A549 (cell line): ENCODE measurements at regions of chr2 and their contacts with region 1.

Region 1: DNA sequence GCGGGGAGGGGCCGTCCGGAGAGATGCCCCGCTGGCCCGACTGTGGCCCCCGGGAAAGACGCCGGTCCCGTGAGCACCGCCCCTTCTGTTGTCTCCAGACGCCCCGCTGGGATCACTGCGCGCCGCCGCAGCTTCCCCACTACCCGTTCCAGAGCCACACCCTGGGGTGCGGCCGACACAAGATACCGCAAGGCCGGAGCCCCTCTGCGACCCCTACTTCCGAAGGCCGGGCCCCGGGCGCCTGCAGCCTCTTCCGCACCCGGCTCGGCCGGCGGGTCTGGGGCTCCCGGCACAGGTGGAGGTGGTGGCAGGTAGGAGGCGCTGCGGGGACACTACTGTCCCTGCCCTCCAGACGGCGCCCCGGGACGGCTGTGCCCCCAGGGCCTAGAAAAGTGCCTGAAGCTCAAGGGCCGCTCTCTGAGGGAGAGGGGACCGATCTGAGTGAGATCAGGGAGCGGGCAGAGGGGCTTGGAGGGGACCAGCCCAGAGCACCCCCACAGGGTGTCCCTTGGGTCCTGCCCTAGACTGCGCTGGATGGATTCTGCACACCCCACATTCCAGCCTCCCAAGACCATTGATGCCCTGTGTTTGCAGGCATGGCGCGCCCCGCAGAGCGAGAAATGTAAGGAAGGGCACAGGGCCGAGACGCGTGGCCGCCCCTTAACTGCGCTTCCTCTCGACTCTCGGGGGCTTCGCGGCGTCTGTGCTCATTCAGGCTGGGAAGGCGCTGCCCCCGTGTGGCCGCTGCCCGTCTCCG is 80.0 kb downstream of the GFPT1 start:
- DNase-seq: peak; percentile 88 to 90
- ATAC-seq: peak; percentile 81 to 92
- H3K4me3 ChIP-seq: peak overlapping the region; percentile 86
- H3K27ac ChIP-seq: peak overlapping the region; percentile 94 to 99
- H3K4me1 ChIP-seq: peaks cover 37% of the 10 kb centered on the region
- CTCF ChIP-seq: peak; percentile 92
- EP300 ChIP-seq: no peak
- POLR2A ChIP-seq: peak; percentile 19; the same call in 1 of the 2 replicates
- RAD21 ChIP-seq: peak; percentile 97 to 99

Region 2: GRCh38 chr2:69020496-69021426 is 286.2 kb before region 1 on chr2:
- CTCF ChIA-PET with region 1: interaction called, 38 read pairs
- POLR2A ChIA-PET with region 1: interaction called, 12 read pairs
- DNase-seq: no peak
- ATAC-seq: no peak
- H3K4me3 ChIP-seq: no peak overlapping the region
- H3K27ac ChIP-seq: peak overlapping the region in 1 of 2 experiments; percentile 30; a peak in 3 of 6 replicates
- H3K4me1 ChIP-seq: peaks cover 85% of the 10 kb centered on the region
- CTCF ChIP-seq: no peak
- EP300 ChIP-seq: no peak
- POLR2A ChIP-seq: no peak
- RAD21 ChIP-seq: no peak

Region 3: GRCh38 chr2:69163109-69163508 is 143.9 kb before region 1 on chr2:
- CTCF ChIA-PET with region 1: interaction called, 17 read pairs
- POLR2A ChIA-PET with region 1: interaction called, 6 read pairs
- DNase-seq: peak; percentile 67 to 90
- ATAC-seq: peak; percentile 83 to 86
- H3K4me3 ChIP-seq: no peak overlapping the region
- H3K27ac ChIP-seq: peak overlapping the region; percentile 74 to 84
- H3K4me1 ChIP-seq: peaks cover 49% of the 10 kb centered on the region
- CTCF ChIP-seq: no peak
- EP300 ChIP-seq: peak; percentile 71 to 75; a peak in 2 of 5 replicates
- POLR2A ChIP-seq: no peak
- RAD21 ChIP-seq: peak in 1 of 2 experiments; percentile 32; a peak in 1 of 5 replicates

Region 4: DNA sequence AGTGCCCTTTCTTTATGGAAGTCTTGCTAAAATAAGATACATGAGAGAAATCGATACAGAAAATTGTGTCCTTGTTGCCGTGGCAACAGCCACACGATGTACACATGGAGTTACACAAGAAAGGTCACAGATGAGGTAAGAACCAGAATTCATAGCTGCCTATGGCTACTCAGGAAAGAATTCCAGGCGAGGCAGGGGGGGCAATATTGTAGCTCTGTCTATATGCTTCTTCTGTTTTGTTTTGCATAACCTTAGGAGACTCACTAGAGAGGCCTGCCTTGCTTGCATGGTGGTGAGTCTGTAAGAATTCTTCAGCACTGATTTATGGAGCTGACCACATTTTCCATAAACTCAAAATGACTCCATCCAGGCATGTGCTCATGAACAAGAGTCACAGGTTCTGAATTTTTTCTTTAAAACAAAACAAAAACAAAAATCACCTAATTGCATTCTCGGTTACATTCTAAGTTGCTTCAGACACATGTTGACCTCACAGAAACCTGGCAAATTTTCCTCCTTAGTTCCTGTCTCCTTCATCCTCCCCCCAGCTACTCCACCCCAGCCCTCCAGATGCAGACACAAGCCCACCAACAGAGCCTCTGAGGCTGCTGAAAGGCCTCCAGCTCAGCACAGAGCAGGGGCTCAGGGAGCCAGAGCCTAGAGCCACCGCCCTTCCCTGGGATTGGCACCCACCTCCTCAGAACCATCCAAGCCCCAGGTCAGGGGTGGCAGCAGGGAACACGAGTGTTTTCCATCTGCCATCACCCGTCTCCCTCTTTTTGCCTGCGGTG is 110.5 kb before region 1 on chr2:
- CTCF ChIA-PET with region 1: interaction called, 15 read pairs
- POLR2A ChIA-PET with region 1: no interaction called
- DNase-seq: peak in 1 of 2 experiments; percentile 58
- ATAC-seq: peak; percentile 52 to 69; a peak in 5 of 6 replicates
- H3K4me3 ChIP-seq: no peak overlapping the region
- H3K27ac ChIP-seq: peak overlapping the region in 1 of 2 experiments; percentile 9; a peak in 1 of 6 replicates
- H3K4me1 ChIP-seq: peaks cover 5% of the 10 kb centered on the region; the same call in 1 of the 3 replicates
- CTCF ChIP-seq: no peak
- EP300 ChIP-seq: no peak
- POLR2A ChIP-seq: no peak
- RAD21 ChIP-seq: no peak

Region 5: DNA sequence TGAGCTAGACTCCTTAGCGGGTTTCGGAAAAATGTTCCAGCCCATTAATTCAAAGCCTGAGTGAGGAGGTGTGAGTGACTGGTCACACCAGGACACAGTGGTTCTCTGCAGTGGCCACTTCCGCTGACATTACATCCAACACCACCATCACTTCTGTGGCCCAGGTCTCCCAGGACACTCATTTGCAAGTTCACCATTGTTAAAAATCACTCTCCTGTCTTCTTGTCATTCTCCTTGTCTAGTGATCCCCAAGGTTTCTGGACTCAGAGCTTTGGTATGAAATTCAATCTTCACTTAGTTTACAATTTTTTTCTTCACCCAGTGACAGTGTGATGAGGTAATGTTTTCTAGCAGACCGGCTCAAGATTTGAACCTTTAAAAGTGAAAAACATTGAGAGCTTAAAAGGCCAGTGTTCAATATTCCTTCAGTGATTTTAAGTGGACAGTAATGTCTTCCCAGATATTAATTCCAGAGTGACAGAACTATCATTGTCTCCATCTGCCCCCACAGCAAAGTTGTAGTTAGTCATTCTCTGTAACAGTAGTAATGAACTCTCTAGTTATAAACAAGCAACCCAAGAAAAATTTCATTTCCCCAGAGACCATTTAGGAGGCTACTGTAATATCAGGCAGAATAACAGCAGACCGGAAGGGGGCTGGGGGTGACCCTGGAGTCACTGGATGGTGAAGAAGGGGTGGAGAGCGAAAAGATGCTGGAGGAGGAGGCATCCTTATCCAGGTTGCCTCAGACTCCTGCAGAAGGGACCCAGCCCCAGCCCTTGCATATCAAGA is 84.8 kb before region 1 on chr2:
- CTCF ChIA-PET with region 1: interaction called, 21 read pairs
- POLR2A ChIA-PET with region 1: no interaction called
- DNase-seq: no peak
- ATAC-seq: no peak; a peak in 1 of 6 replicates
- H3K4me3 ChIP-seq: no peak overlapping the region
- H3K27ac ChIP-seq: peak overlapping the region in 1 of 2 experiments; percentile 11; a peak in 1 of 6 replicates
- H3K4me1 ChIP-seq: peaks cover 22% of the 10 kb centered on the region; the same call in 2 of the 3 replicates
- CTCF ChIP-seq: no peak
- EP300 ChIP-seq: no peak
- POLR2A ChIP-seq: no peak
- RAD21 ChIP-seq: no peak

Region 6: GRCh38 chr2:69271831-69272257 is 35.2 kb before region 1 on chr2:
- CTCF ChIA-PET with region 1: interaction called, 19 read pairs
- POLR2A ChIA-PET with region 1: no interaction called
- DNase-seq: no peak
- ATAC-seq: no peak
- H3K4me3 ChIP-seq: no peak overlapping the region
- H3K27ac ChIP-seq: no peak overlapping the region
- H3K4me1 ChIP-seq: no peaks in the 10 kb centered on the region
- CTCF ChIP-seq: no peak
- EP300 ChIP-seq: no peak
- POLR2A ChIP-seq: no peak
- RAD21 ChIP-seq: no peak